Activated CD4-positive, alpha-beta T cell treated with anti-CD3 and anti-CD28 coated beads for 36 hours (primary cell): ENCODE measurements at regions of chr20 and their contacts with region 1.

Region 1: GRCh38 chr20:35454881-35455609 is at the start of gene CEP250:
- DNase-seq: peak; percentile 98
- ATAC-seq: peak; percentile 97
- H3K4me3 Mint-ChIP-seq: peak within 1 kb of the TSS; percentile 79
- H3K27ac Mint-ChIP-seq: peak within 1 kb of the TSS; percentile 97
- H3K4me1 Mint-ChIP-seq: peaks cover 27% of the 10 kb centered on the region
- H3K27me3 Mint-ChIP-seq: no peaks in the 10 kb centered on the region
- total RNA-seq, gene CEP250: 50.4 to 60.2 TPM

Region 2: DNA sequence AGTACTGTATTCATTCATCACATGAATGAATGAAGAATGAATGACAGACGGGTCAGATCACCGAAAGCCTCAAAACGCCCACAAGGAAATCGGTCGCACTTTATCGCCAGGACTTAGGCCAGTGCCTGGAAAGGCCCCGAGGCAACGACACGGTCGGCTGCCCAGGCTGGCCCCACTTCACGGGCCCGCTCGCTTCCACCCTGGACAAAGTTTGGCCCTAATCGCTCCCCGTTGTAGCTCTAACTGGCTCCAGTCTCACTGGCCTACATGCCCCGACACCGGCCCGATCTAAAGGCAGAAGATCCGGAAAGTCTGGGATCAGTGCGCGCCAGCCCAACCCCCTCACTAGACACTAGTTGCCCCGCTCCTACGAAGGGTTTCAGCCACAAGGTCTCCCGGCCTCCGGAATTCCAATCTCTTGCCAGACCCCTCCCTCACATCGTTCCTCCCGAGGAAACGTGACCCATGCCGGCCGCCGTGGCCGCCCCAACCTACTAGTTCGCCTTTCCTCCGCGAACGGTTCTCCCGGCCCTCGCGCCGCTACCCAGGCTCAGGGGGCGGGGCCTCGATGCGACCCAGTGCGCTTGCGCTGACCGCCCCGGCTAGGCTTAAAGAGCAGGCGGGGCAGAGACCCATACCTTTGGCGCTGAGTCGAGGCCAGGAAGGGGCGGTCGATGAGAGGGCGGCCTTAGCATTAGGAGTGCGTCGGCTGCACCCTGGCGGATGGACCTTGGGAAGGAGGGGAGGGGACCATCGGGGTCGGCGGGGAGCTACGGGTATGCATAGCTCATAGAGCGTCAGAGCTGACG is 499.6 kb before region 1 on chr20 and contains the starts of genes GSS and MYH7B:
- CTCF ChIA-PET with region 1: no interaction called
- POLR2A ChIA-PET with region 1: no interaction called
- intact Hi-C with region 1: loop called in 1 of 2 experiments (anchors 1 kb)
- DNase-seq: peak; percentile 99
- ATAC-seq: peak; percentile 95
- H3K4me3 Mint-ChIP-seq: peak within 1 kb of the TSS; percentile 98
- H3K27ac Mint-ChIP-seq: peak within 1 kb of the TSS; percentile 94
- H3K4me1 Mint-ChIP-seq: peaks cover 16% of the 10 kb centered on the region
- H3K27me3 Mint-ChIP-seq: no peaks in the 10 kb centered on the region
- total RNA-seq, gene GSS: 58.7 to 59.5 TPM
- total RNA-seq, gene MYH7B: 0.23 to 0.40 TPM

Region 3: GRCh38 chr20:35269055-35269781 is 185.8 kb before region 1 on chr20:
- CTCF ChIA-PET with region 1: no interaction called
- POLR2A ChIA-PET with region 1: no interaction called
- intact Hi-C with region 1: no loop called
- DNase-seq: peak; percentile 74
- ATAC-seq: peak; percentile 82
- H3K4me3 Mint-ChIP-seq: no peak overlapping the region
- H3K27ac Mint-ChIP-seq: no peak overlapping the region
- H3K4me1 Mint-ChIP-seq: no peaks in the 10 kb centered on the region
- H3K27me3 Mint-ChIP-seq: no peaks in the 10 kb centered on the region

Region 4: GRCh38 chr20:35303735-35304491 is 151.1 kb before region 1 on chr20:
- CTCF ChIA-PET with region 1: interaction called, 23 read pairs
- POLR2A ChIA-PET with region 1: interaction called, 6 read pairs
- intact Hi-C with region 1: loop called (anchors 2 kb)
- DNase-seq: peak; percentile 92
- ATAC-seq: peak; percentile 57
- H3K4me3 Mint-ChIP-seq: no peak overlapping the region
- H3K27ac Mint-ChIP-seq: peak overlapping the region; percentile 93
- H3K4me1 Mint-ChIP-seq: peaks cover 59% of the 10 kb centered on the region
- H3K27me3 Mint-ChIP-seq: no peaks in the 10 kb centered on the region

Region 5: DNA sequence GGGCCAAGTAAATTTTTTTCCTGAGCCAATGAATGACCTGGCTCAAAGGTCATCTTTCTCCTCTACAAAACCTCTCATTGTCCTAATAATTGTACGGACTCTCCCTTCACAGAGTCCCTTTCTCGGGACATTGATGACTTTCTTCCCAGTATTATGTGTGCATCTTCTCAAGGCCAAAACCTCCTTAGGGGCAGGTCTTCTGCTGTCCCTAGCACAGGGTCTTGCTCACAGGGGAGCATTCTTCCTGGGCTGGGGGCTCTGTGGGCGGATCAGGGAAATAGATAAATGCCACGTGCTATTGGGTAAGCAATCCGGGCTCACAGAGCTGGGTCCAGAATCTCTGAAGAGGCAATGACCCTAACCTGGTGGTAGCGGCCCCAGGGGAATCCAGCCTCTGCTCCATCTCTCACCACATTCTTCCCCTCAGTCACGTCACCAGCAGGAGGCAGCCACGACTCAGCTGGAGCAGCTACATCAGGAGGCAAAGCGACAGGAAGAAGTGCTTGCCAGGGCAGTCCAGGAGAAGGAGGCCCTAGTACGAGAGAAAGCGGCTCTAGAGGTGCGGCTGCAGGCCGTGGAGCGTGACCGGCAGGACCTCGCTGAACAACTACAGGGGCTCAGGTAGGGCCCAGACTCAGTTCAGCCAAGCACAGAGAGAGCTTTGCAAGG is 23.9 kb after region 1 on chr20:
- CTCF ChIA-PET with region 1: no interaction called
- POLR2A ChIA-PET with region 1: no interaction called
- intact Hi-C with region 1: no loop called
- DNase-seq: peak; percentile 39
- ATAC-seq: no peak
- H3K4me3 Mint-ChIP-seq: no peak overlapping the region
- H3K27ac Mint-ChIP-seq: no peak overlapping the region
- H3K4me1 Mint-ChIP-seq: no peaks in the 10 kb centered on the region
- H3K27me3 Mint-ChIP-seq: no peaks in the 10 kb centered on the region

Region 6: DNA sequence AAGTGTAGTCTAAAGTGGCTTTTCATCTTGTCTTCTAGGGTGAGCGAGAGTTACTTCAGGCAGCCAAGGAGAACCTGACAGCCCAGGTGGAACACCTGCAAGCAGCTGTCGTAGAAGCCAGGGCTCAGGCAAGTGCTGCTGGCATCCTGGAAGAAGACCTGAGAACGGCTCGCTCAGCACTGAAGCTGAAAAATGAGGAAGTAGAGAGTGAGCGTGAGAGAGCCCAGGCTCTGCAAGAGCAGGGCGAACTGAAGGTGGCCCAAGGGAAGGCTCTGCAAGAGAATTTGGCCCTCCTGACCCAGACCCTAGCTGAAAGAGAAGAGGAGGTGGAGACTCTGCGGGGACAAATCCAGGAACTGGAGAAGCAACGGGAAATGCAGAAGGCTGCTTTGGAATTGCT is 47.3 kb after region 1 on chr20:
- CTCF ChIA-PET with region 1: no interaction called
- POLR2A ChIA-PET with region 1: no interaction called
- intact Hi-C with region 1: no loop called
- DNase-seq: no peak
- ATAC-seq: no peak
- H3K4me3 Mint-ChIP-seq: no peak overlapping the region
- H3K27ac Mint-ChIP-seq: no peak overlapping the region
- H3K4me1 Mint-ChIP-seq: peaks cover 19% of the 10 kb centered on the region
- H3K27me3 Mint-ChIP-seq: no peaks in the 10 kb centered on the region

Region 7: DNA sequence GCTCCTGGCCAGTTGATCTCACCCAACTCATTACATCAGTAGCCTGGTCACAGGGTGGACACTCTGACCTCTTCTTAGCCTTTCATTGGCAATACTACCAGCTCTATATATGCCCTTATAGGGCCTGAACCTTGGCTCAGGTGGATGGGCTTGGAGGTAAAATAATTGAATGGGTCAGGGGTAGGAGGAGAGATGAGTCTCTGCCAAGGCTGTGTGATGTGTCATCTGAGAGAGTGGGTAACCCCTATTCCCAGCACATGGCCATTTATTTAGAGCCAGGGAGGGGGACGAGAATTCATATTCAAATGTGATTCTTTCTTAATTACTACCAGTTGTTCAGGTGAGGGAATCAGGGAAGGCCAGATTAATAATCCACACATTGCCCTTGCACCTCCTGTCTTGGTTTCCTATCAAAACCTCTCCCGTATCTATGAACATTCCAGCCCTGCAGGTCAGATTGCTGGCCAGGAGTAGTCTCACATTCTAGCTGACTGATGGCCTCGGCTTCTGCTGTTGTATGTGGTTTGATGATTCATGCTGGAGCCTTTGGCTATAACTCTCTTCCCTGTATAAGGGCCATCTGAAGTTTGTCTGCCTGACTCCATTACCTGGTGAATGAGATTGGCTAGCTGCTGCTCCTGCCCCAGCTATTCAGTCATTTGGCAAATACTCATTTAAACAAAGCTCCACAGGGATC is 61.1 kb after region 1 on chr20:
- CTCF ChIA-PET with region 1: no interaction called
- POLR2A ChIA-PET with region 1: no interaction called
- intact Hi-C with region 1: no loop called
- DNase-seq: no peak
- ATAC-seq: no peak
- H3K4me3 Mint-ChIP-seq: no peak overlapping the region
- H3K27ac Mint-ChIP-seq: no peak overlapping the region
- H3K4me1 Mint-ChIP-seq: no peaks in the 10 kb centered on the region
- H3K27me3 Mint-ChIP-seq: no peaks in the 10 kb centered on the region

Region 8: DNA sequence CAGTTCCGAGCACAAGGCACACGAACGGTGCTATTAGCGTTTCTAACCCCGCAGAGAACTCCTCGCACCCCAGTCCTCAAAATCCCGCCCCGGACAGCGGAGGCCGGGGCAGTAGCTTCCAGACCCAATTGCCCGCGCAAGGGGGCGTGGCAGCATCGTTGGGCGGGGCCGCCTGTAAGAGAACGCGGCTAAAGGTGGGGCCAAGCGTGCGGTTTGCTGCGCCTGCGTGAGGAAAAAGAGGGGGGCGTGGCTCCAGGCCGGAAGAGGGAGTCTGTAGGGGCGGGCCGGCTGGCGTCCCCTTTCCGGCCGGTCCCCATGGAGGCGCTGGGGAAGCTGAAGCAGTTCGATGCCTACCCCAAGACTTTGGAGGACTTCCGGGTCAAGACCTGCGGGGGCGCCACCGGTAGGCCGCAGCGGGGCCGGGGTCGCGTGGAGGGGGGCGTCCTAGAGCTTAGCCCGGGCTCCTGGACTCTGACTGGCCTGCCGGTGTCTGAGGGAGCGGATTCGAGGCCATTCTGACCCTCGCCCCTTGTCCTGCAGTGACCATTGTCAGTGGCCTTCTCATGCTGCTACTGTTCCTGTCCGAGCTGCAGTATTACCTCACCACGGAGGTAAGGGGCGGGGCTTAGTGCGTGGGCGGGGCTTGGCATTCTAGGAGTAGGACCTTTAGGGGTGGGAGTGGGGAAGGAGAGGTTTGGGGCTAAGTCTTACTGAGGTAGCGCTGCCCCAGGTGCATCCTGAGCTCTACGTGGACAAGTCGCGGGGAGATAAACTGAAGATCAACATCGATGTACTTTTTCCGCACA is 86.9 kb after region 1 on chr20 and contains the start of gene ERGIC3:
- CTCF ChIA-PET with region 1: no interaction called
- POLR2A ChIA-PET with region 1: interaction called, 5 read pairs
- intact Hi-C with region 1: loop called (anchors 1 kb)
- DNase-seq: peak; percentile 99
- ATAC-seq: peak; percentile 99
- H3K4me3 Mint-ChIP-seq: peak within 1 kb of the TSS; percentile 83
- H3K27ac Mint-ChIP-seq: peak within 1 kb of the TSS; percentile 83
- H3K4me1 Mint-ChIP-seq: peaks cover 15% of the 10 kb centered on the region
- H3K27me3 Mint-ChIP-seq: no peaks in the 10 kb centered on the region
- total RNA-seq, gene ERGIC3: 109 to 127 TPM

Region 9: DNA sequence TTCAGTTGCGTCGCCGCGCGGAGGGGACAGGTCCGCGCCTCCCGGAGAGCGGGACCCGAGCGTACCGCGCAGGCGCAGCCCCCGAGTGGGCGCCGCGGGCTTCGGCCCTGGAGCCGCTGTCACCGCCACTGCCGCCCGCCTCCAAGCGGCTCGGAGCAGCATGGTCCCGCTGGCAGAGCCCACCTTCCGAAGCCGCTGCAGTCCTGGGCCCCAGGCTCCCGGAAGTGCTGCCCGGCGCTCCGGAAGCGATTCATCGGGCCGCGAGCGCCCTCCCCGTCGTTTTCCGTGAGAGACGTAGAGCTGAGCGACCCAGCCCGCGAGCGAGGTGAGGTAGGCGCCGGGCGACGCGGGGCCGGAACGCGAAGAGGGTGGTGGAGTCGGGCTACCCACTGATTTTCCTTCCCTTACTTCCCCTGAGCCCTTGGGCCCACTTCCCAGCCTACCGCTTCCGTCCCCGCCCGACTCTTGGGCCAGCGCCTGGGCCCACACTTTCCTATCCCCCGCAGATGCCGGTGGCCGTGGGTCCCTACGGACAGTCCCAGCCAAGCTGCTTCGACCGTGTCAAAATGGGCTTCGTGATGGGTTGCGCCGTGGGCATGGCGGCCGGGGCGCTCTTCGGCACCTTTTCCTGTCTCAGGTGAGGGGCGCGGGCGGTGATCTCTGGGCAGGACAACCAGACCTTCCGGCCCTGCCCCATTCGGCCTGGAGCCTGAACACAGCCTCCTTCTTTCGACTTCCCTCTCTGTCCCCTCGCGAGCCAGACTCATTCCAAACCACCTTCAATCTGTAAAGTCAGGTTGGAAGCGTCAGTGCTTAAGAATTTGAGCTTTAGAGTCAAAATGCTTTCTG is 244.3 kb after region 1 on chr20 and contains the starts of genes NFS1 and ROMO1:
- CTCF ChIA-PET with region 1: no interaction called
- POLR2A ChIA-PET with region 1: interaction called, 3 read pairs
- intact Hi-C with region 1: loop called (anchors 2 to 10 kb)
- DNase-seq: peak; percentile 94
- ATAC-seq: peak; percentile 92
- H3K4me3 Mint-ChIP-seq: peak within 1 kb of the TSS; percentile 87
- H3K27ac Mint-ChIP-seq: peak within 1 kb of the TSS; percentile 98
- H3K4me1 Mint-ChIP-seq: peaks cover 44% of the 10 kb centered on the region
- H3K27me3 Mint-ChIP-seq: no peaks in the 10 kb centered on the region
- total RNA-seq, gene NFS1: 43.2 to 44.6 TPM
- total RNA-seq, gene ROMO1: 50.4 to 112 TPM

Region 10: GRCh38 chr20:36050436-36051317 is 595.6 kb after region 1 on chr20:
- CTCF ChIA-PET with region 1: no interaction called
- POLR2A ChIA-PET with region 1: interaction called, 3 read pairs
- intact Hi-C with region 1: loop called in 1 of 2 experiments (anchors 2 kb)
- DNase-seq: peak; percentile 95
- ATAC-seq: peak; percentile 98
- H3K4me3 Mint-ChIP-seq: peak overlapping the region; percentile 96
- H3K27ac Mint-ChIP-seq: peak overlapping the region; percentile 91
- H3K4me1 Mint-ChIP-seq: peaks cover 34% of the 10 kb centered on the region
- H3K27me3 Mint-ChIP-seq: no peaks in the 10 kb centered on the region